ENCODE measurements at regions of chr15 and their contacts with region 1.

Region 1: DNA sequence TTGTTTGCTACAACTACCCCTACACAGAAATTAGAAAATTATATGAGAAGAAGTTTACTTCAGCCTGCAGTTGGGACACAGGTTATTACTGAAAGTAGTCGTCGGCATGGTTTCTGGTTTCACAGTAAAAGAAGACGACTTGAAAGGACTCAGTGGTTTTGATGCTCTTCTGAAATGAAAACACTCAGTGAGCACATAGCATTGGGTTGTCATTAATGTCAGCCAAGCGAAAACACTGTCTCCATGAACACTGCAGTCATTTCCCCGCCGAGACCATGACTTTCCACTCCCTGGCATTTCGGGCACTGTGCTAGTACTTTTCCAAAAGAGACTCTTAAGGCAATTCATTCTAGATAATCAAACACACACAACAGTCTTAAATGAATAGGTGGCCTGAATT is 69.2 kb upstream of the ICE2 start:
- DNase-seq: peak; percentile 84
- ATAC-seq: peak; percentile 83
- H3K4me3 Mint-ChIP-seq: peak overlapping the region; percentile 61
- H3K27ac Mint-ChIP-seq: peak overlapping the region; percentile 96
- H3K4me1 Mint-ChIP-seq: peaks cover 97% of the 10 kb centered on the region
- H3K27me3 Mint-ChIP-seq: no peaks in the 10 kb centered on the region

Region 2: GRCh38 chr15:60568301-60568742 is 20.2 kb after region 1 on chr15:
- CTCF ChIA-PET with region 1: interaction called, 11 read pairs
- POLR2A ChIA-PET with region 1: interaction called, 10 read pairs
- intact Hi-C with region 1: loop called (anchors 1 kb)
- DNase-seq: no peak
- ATAC-seq: peak; percentile 20
- H3K4me3 Mint-ChIP-seq: no peak overlapping the region
- H3K27ac Mint-ChIP-seq: peak overlapping the region; percentile 75
- H3K4me1 Mint-ChIP-seq: peaks cover 89% of the 10 kb centered on the region
- H3K27me3 Mint-ChIP-seq: no peaks in the 10 kb centered on the region

Region 3: DNA sequence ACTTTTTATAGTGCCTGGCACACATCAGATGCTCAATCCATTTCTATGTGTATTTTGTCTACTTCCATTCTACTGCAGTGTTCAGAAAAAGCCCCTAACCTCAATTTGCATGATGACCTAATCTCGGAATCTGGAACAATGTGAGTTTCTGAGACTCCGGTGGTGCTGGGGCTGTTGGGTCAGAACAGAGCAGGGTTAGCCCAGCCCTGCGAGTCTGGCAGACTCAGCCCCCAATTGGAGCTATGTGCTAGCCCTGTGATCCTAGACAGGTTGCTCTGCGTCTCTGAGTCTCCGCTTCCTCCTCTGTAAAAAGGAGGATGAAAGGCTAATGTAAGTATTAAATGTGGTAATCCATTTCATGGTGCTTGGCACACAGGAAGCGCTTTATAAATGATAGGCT is 25.8 kb after region 1 on chr15:
- CTCF ChIA-PET with region 1: interaction called, 11 read pairs
- POLR2A ChIA-PET with region 1: interaction called, 10 read pairs
- intact Hi-C with region 1: loop called (anchors 1 kb)
- DNase-seq: peak; percentile 70
- ATAC-seq: peak; percentile 68
- H3K4me3 Mint-ChIP-seq: peak overlapping the region; percentile 58
- H3K27ac Mint-ChIP-seq: peak overlapping the region; percentile 96
- H3K4me1 Mint-ChIP-seq: peaks cover 88% of the 10 kb centered on the region
- H3K27me3 Mint-ChIP-seq: no peaks in the 10 kb centered on the region